Natural killer cell (primary cell): ENCODE measurements at regions of chr11 and their contacts with region 1.

Region 1: GRCh38 chr11:128506999-128507611 is 80.3 kb downstream of the ETS1 start:
- DNase-seq: peak in 1 of 2 donors; percentile 60
- ATAC-seq: peak; percentile 42 to 57 (median 49)
- H3K4me3 ChIP-seq: peak overlapping the region; percentile 18
- H3K4me3 Mint-ChIP-seq: peak overlapping the region; percentile 98
- H3K27ac ChIP-seq: peak overlapping the region; percentile 67
- H3K27ac Mint-ChIP-seq: peak overlapping the region; percentile 98 to 99
- H3K4me1 ChIP-seq: peaks cover 77% of the 10 kb centered on the region
- H3K4me1 Mint-ChIP-seq: peaks cover 99 to 100% of the 10 kb centered on the region in 2 donors
- H3K27me3 ChIP-seq: no peaks in the 10 kb centered on the region
- H3K27me3 Mint-ChIP-seq: no peaks in the 10 kb centered on the region
- CTCF ChIP-seq: no peak

Region 2: GRCh38 chr11:127345819-127346459 is 1161.2 kb before region 1 on chr11:
- intact Hi-C with region 1: no loop called
- DNase-seq: peak in 1 of 2 donors; percentile 43
- ATAC-seq: no peak
- H3K4me3 ChIP-seq: no peak overlapping the region
- H3K4me3 Mint-ChIP-seq: no peak overlapping the region
- H3K27ac ChIP-seq: no peak overlapping the region
- H3K27ac Mint-ChIP-seq: no peak overlapping the region
- H3K4me1 ChIP-seq: no peaks in the 10 kb centered on the region
- H3K4me1 Mint-ChIP-seq: no peaks in the 10 kb centered on the region
- H3K27me3 ChIP-seq: no peaks in the 10 kb centered on the region
- H3K27me3 Mint-ChIP-seq: peaks cover 3 to 22% of the 10 kb centered on the region in 2 donors
- CTCF ChIP-seq: peak; percentile 34

Region 3: GRCh38 chr11:128482512-128483191 is 24.5 kb before region 1 on chr11:
- intact Hi-C with region 1: loop called (anchors 2 kb)
- DNase-seq: peak in 1 of 2 donors; percentile 88
- ATAC-seq: peak; percentile 72 to 80 (median 78)
- H3K4me3 ChIP-seq: peak overlapping the region; percentile 14
- H3K4me3 Mint-ChIP-seq: peak overlapping the region; percentile 77
- H3K27ac ChIP-seq: peak overlapping the region; percentile 92
- H3K27ac Mint-ChIP-seq: peak overlapping the region; percentile 98 to 99
- H3K4me1 ChIP-seq: peaks cover 56% of the 10 kb centered on the region
- H3K4me1 Mint-ChIP-seq: peaks cover 92 to 95% of the 10 kb centered on the region in 2 donors
- H3K27me3 ChIP-seq: no peaks in the 10 kb centered on the region
- H3K27me3 Mint-ChIP-seq: no peaks in the 10 kb centered on the region
- CTCF ChIP-seq: no peak